CD8-positive, alpha-beta T cell (primary cell): ENCODE measurements at regions of chr4 and their contacts with region 1.

Region 1: GRCh38 chr4:152535903-152536544 is at the start of gene FBXW7:
- DNase-seq: peak; percentile 99 to 100 (median 100)
- ATAC-seq: peak; percentile 77
- H3K4me3 ChIP-seq: peak within 1 kb of the TSS; percentile 79
- H3K4me3 Mint-ChIP-seq: peak within 1 kb of the TSS; percentile 87
- H3K27ac ChIP-seq: peak within 1 kb of the TSS; percentile 97 to 98
- H3K27ac Mint-ChIP-seq: peak within 1 kb of the TSS; percentile 97
- H3K4me1 ChIP-seq: peaks cover 52% of the 10 kb centered on the region
- H3K4me1 Mint-ChIP-seq: peaks cover 64% of the 10 kb centered on the region
- H3K27me3 ChIP-seq: no peaks in the 10 kb centered on the region
- H3K27me3 Mint-ChIP-seq: no peaks in the 10 kb centered on the region
- CTCF ChIP-seq: no peak
- total RNA-seq, gene FBXW7: 129 to 135 TPM

Region 2: GRCh38 chr4:151099229-151099975 is 1436.6 kb before region 1 on chr4 and contains the start of gene RPS3A:
- CTCF ChIA-PET with region 1: no interaction called
- POLR2A ChIA-PET with region 1: interaction called, 5 read pairs
- intact Hi-C with region 1: loop called (anchors 1 to 2 kb)
- DNase-seq: peak; percentile 94 to 99 (median 98)
- ATAC-seq: peak; percentile 90
- H3K4me3 ChIP-seq: peak within 1 kb of the TSS; percentile 85 to 97
- H3K4me3 Mint-ChIP-seq: peak within 1 kb of the TSS; percentile 97
- H3K27ac ChIP-seq: peak within 1 kb of the TSS; percentile 88 to 96
- H3K27ac Mint-ChIP-seq: peak within 1 kb of the TSS; percentile 98
- H3K4me1 ChIP-seq: peaks cover 29% of the 10 kb centered on the region
- H3K4me1 Mint-ChIP-seq: peaks cover 35% of the 10 kb centered on the region
- H3K27me3 ChIP-seq: peaks cover 0 to 2% of the 10 kb centered on the region in 2 experiments
- H3K27me3 Mint-ChIP-seq: no peaks in the 10 kb centered on the region
- CTCF ChIP-seq: peak; percentile 84
- total RNA-seq, gene RPS3A: 3,746 to 3,978 TPM

Region 3: DNA sequence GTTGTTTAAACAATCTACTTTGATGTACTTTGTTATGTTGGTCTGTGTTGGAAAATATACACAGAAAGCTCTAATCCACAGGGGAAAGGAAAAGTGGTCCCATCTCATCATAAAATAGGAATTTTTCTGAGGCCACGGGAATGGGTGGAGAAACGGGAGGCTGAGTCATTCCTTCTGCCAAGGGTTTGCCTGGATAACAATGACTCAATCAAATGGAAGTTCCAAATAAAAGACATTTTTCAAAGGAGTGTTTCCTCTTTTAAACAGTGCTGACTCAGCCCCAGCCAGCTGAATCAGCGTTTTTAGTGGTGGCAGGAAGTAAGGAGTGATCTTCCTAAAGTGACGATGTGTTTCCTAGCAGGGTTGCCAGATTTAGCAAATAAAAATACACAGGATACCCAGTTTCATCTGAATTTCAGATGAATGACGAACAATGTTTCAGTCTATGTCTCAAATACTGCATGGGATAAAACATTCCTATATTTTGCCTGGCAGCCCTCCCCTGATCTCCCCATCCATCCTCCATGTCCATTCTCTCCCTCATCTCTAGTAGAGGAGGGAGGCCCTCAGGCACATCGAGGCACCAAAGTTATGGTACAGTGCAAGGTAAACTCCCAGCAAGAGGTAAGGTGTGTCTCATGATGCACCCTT is 429.8 kb before region 1 on chr4:
- CTCF ChIA-PET with region 1: no interaction called
- POLR2A ChIA-PET with region 1: no interaction called
- intact Hi-C with region 1: loop called in 1 of 2 experiments (anchors 10 kb)
- DNase-seq: peak in 2 of 9 experiments; percentile 28 to 46
- ATAC-seq: no peak
- H3K4me3 ChIP-seq: no peak overlapping the region
- H3K4me3 Mint-ChIP-seq: peak overlapping the region; percentile 20
- H3K27ac ChIP-seq: no peak overlapping the region
- H3K27ac Mint-ChIP-seq: peak overlapping the region; percentile 99
- H3K4me1 ChIP-seq: peaks cover 97% of the 10 kb centered on the region
- H3K4me1 Mint-ChIP-seq: peaks cover 96% of the 10 kb centered on the region
- H3K27me3 ChIP-seq: no peaks in the 10 kb centered on the region
- H3K27me3 Mint-ChIP-seq: no peaks in the 10 kb centered on the region
- CTCF ChIP-seq: no peak

Region 4: DNA sequence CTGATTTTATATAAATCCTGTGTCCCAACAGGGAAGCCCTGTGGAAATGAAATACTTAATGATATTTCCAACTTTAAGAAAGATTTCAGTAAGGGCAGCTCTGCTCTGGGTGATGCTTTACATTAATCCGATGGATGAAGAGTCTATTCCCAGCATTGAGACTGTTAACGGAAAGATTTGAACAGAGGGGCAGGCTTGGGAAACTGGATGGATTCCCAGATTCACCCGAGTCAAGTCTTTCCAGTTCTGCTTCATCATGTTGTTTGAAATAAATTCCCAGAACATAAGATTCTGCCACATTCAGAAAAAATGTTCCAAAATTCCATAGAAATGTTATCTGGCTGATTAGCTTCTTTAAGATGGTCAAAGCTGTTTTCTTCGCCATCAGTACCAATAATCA is 246.1 kb before region 1 on chr4:
- CTCF ChIA-PET with region 1: no interaction called
- POLR2A ChIA-PET with region 1: no interaction called
- intact Hi-C with region 1: no loop called
- DNase-seq: no peak
- ATAC-seq: no peak
- H3K4me3 ChIP-seq: no peak overlapping the region
- H3K4me3 Mint-ChIP-seq: no peak overlapping the region
- H3K27ac ChIP-seq: no peak overlapping the region
- H3K27ac Mint-ChIP-seq: no peak overlapping the region
- H3K4me1 ChIP-seq: no peaks in the 10 kb centered on the region
- H3K4me1 Mint-ChIP-seq: no peaks in the 10 kb centered on the region
- H3K27me3 ChIP-seq: no peaks in the 10 kb centered on the region
- H3K27me3 Mint-ChIP-seq: no peaks in the 10 kb centered on the region
- CTCF ChIP-seq: no peak

Region 5: GRCh38 chr4:152559641-152560040 is 23.6 kb after region 1 on chr4:
- CTCF ChIA-PET with region 1: interaction called, 3 read pairs
- POLR2A ChIA-PET with region 1: interaction called, 48 read pairs
- intact Hi-C with region 1: loop called in 1 of 2 experiments (anchors 2 kb)
- DNase-seq: no peak
- ATAC-seq: no peak
- H3K4me3 ChIP-seq: no peak overlapping the region
- H3K4me3 Mint-ChIP-seq: no peak overlapping the region
- H3K27ac ChIP-seq: no peak overlapping the region
- H3K27ac Mint-ChIP-seq: no peak overlapping the region
- H3K4me1 ChIP-seq: peaks cover 4% of the 10 kb centered on the region
- H3K4me1 Mint-ChIP-seq: peaks cover 16% of the 10 kb centered on the region
- H3K27me3 ChIP-seq: no peaks in the 10 kb centered on the region
- H3K27me3 Mint-ChIP-seq: no peaks in the 10 kb centered on the region
- CTCF ChIP-seq: no peak

Region 6: DNA sequence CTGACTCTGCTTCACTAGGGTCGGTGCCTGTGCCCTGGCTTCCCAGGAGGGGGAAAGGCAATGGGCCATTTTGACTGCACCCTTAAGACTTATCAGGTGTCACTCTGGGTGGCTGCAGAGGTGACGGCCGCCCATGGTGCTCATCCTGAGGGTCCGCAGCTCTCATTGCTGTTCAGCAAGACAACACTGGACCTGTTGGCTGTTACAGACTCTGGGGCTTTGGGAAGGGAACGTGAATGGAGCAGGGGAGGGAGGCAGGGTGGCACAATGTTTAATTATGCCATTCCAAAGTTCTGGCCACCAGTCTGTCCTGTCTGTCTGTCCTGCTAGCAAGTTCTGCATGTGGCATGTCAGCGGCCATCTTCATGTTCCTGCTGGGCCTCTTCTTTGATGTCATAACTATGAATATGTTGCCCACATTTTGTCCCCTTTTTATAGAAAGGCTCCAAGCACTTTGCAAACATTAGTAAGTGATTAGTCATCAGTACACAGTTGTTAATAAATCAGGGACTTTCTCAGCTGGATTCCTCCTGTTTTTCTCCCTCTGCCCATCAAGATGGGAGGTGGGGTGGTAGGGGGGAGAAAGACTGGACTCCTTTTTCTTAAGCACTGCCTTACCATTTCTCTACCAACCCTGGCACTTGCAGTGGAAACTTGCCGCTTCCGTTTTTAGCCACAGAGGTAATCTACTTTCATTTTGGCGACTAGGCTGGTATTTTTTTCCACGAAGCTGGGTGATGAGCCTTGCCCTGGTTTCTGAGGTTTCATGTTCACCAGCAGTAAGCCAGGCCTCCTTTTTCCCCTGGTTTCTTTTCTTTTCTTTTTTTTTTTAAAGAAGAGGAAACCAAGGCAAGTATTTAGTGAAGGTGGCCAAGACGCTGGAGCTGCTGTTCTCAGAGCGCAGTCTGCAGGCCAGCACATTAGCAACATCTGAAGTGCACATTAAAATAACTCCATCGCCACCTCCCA is 579.6 kb after region 1 on chr4:
- CTCF ChIA-PET with region 1: no interaction called
- POLR2A ChIA-PET with region 1: no interaction called
- intact Hi-C with region 1: loop called in 1 of 2 experiments (anchors 5 kb)
- DNase-seq: peak; percentile 41 to 92 (median 76)
- ATAC-seq: peak; percentile 52
- H3K4me3 ChIP-seq: peak overlapping the region in 1 of 2 experiments; percentile 31
- H3K4me3 Mint-ChIP-seq: no peak overlapping the region
- H3K27ac ChIP-seq: peak overlapping the region; percentile 58 to 78
- H3K27ac Mint-ChIP-seq: no peak overlapping the region
- H3K4me1 ChIP-seq: peaks cover 64% of the 10 kb centered on the region
- H3K4me1 Mint-ChIP-seq: peaks cover 9% of the 10 kb centered on the region
- H3K27me3 ChIP-seq: no peaks in the 10 kb centered on the region
- H3K27me3 Mint-ChIP-seq: no peaks in the 10 kb centered on the region
- CTCF ChIP-seq: no peak